Head of caudate nucleus (tissue), 42 donors: ENCODE measurements at regions of chr10 and their contacts with region 1.

Region 1: DNA sequence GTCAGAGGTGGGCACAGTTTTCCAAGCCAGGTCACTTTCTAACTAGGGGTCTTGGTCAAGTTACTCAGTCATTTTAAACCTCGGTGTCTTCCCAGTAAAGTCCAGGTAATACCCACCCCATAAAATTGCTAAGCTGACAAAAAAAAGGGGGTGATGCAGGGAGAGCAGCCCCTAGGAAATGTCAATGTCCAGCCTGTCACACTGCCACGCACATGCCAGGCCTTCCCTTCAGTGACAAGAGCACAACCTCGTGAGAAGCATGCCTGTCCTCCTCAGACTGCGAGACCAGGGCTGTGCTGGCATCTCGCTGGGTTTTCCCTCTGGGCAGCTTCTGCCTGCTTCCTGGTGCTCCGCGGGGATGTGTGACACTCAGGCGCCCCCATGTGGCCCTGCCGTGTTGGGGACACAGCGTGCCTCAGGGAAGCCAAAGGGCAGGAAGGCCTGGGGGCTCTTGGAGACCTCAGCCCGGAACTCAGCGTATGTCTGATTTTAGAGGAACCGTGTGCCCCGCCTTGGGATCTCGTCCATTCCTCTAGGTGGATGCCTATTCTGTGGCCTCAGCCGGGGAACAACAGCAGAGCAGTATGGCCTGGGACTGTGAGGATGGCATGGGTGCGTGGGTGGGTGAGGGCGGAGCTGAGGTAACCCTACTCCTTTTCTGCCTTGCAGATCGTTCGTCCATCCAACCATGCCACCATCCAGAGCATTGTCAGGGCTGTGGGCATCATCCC is 10.2 kb upstream of the GDF2 start:
- DNase-seq: peak; percentile 79 to 94 (median 89)

Region 2: DNA sequence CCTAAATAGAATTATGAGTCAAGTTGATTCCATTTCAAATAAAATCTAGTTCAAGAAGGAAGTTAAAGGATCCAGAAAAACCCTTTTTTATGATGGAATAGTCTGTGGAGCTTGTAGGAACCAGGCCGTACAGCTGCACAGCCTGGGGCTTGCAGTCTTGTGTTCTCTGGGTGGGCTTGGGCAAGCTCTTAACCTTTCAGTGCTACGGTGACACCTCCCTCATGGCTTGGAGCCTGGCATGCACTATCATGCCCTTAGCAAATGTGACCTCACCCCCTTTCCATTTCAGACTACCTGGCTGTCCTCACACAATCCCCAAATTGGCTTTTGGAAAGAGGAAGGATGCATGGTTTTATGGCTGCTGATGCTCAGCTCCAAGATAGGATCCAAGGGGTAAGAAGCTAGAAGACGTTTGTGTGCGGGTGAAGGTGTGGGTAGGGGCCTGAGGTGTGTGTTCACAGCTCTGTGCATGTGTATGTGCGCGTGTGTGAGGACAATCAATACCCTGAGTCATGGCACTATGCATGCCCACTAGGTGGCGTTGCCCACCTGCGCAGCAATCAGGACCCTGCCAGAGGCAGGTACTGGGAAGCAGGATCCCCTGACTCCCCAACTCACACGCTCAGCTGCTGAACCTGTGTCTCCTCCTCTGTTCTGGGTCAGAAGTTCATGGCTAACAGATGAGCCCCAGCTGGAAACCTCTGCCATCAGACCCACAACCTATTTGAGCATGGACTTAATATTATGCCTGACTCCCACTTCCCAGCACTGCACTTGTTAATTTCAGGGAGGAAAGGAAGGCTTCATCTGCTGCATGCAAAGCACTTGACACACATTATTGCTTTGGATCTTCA is 287.5 kb before region 1 on chr10:
- intact Hi-C with region 1: loop called (anchors 2 kb)
- DNase-seq: peak; percentile 63 to 91 (median 78)

Region 3: DNA sequence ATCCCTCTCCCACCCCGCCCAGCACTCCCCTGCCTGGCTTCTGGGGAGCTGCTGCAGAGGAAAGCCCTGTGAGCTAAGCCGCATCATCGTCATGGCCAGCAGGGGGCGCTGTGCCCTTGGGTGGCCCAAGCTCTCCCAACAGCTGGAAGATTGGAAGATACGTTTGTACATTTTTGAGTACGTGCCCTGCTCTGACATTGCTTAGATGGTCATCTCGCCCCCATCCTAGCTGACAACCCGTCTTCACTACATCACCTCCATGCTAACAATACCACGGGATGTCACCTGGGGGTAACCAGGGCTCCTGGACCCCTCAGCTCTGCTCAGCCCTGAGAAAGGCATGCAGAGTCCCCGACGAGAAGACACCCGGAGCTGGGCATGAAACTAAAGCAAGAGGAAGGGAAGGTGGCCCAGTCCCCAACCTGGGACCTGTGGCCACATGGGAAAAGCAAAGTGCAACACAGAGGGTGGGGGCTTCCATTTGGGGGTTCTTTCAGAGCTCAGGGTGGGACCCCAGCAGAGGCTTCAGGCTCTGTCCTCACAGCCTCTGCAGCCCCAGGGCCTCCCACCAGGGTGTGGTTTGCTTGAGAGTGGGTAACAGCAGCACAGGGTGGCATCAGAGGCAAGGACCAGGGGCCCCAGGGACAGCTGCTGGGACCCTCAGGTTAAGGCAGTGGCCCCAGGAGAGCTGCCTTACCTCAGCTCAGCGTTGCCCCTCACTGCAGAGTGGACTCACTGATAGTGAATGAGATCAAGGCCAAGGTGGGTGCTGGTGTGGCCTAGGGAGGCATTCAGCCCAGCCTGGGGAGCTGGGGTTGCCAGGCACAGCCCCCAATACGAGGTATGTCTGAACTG is 264.2 kb before region 1 on chr10:
- intact Hi-C with region 1: loop called (anchors 5 kb)
- DNase-seq: peak in 41 of 42 donors; percentile 37 to 89 (median 72)